ENCODE measurements at regions of chr12 and their contacts with region 1.

Region 1: GRCh38 chr12:25958428-25959070 is at the start of gene RASSF8:
- DNase-seq: peak; percentile 53 to 62
- ATAC-seq: peak; percentile 88 to 89
- H3K4me3 ChIP-seq: peak within 1 kb of the TSS; percentile 85
- H3K27ac ChIP-seq: peak within 1 kb of the TSS; percentile 87 to 94
- H3K4me1 ChIP-seq: peaks cover 13% of the 10 kb centered on the region
- CTCF ChIP-seq: peak; percentile 23
- EP300 ChIP-seq: no peak
- POLR2A ChIP-seq: peak; percentile 22
- RAD21 ChIP-seq: no peak
- polyA plus RNA-seq, gene RASSF8: 7.4 and 8.7 TPM in 2 replicates

Region 2: DNA sequence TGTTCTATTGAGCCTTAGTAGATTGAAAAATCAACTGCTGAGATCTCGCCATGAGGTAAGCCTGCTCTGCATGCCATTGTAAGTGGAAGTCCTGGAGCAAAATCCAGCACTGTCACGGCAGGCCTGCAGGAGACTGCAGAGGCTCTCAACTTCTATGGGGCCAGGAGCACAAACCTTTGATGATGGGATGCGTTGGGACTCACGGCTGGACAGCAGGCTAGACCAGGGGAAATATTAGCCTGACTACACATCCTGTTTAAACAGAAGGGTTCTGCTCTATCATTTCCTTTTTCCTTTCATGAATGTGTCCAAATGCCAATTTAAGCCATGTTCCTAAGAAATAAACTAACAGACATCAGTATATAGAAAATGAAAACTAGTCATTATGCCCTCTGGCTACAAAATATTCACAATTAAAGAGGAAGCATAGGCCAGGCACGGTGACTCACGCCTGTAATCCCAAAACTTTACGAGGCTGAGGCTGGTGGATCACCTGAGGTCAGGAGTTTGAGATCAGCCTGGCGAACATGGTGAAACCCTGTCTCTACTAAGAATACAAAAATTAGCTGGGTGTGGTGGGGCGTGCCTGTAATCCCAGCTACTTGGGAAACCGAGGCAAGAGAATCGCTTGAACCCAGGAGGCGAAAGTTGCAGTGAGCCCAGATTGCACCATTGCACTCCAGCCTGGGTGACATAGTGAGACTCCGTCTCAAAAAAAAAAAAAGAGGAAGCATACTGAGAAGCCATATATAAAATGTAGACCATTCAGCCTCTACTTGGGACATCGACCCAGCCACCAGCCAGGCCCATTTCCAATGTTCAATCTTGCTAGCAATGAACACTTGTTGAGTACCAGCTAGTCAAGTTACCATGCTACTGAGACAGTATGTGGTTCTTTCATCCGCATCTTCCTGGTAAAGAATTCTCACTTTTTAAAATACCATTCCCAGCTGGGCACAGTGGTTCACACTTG is 33.8 kb before region 1 on chr12:
- CTCF ChIA-PET with region 1: no interaction called
- POLR2A ChIA-PET with region 1: no interaction called
- DNase-seq: peak in 1 of 2 experiments; percentile 5
- ATAC-seq: no peak
- H3K4me3 ChIP-seq: no peak overlapping the region
- H3K27ac ChIP-seq: no peak overlapping the region
- H3K4me1 ChIP-seq: no peaks in the 10 kb centered on the region
- CTCF ChIP-seq: no peak
- EP300 ChIP-seq: no peak
- POLR2A ChIP-seq: no peak
- RAD21 ChIP-seq: no peak

Region 3: DNA sequence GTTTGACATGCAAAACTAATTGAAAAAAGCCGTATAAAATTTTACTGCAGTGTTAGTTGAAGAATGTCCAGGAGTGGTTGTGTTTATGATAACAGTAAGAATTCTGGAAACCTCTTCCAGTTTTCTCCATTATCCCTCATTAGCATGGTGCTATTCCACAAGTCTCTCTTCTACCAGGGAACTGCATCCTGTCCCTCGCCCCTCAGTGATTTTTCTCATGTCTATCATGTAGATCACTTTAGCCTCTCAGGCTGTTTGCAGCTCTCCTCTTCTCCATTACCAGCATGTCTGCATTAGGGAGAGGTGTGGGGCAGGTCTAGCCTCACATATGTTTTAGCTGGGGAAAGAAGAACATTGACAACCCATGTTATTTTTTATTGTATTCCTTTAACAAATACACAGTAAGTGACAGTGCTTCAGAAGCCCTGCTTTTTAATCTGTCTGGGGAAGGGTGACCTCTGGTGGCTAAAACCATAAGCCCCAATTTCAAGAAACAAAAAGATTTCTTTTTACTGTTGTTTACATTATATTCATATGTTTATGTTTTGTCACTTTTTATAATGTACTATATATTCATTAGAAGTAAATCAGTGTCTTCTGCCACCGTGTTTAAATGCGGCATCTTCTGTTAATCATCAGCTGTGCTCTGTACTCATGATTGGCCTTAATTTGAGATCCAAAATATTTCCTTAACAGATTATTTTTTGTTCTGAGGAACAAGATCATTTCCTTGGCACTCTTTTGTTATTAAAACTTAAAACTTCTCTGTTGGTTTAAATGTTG is 70.6 kb after region 1 on chr12:
- CTCF ChIA-PET with region 1: interaction called, 10 read pairs
- POLR2A ChIA-PET with region 1: no interaction called
- DNase-seq: peak; percentile 37 to 63
- ATAC-seq: peak; percentile 56 to 74; a peak in 4 of 6 replicates
- H3K4me3 ChIP-seq: no peak overlapping the region
- H3K27ac ChIP-seq: no peak overlapping the region
- H3K4me1 ChIP-seq: peaks cover 9% of the 10 kb centered on the region; the same call in 2 of the 3 replicates
- CTCF ChIP-seq: peak; percentile 94
- EP300 ChIP-seq: no peak
- POLR2A ChIP-seq: no peak
- RAD21 ChIP-seq: peak; percentile 84 to 86